ENCODE measurements at regions of chr9 and their contacts with region 1.

Region 1: GRCh38 chr9:101566904-101567724 is 27.7 kb downstream of the PPP3R2 start:
- DNase-seq: peak; percentile 80
- H3K4me3 Mint-ChIP-seq: no peak overlapping the region
- H3K27ac Mint-ChIP-seq: peak overlapping the region; percentile 59
- H3K4me1 Mint-ChIP-seq: peaks cover 53% of the 10 kb centered on the region
- H3K27me3 Mint-ChIP-seq: no peaks in the 10 kb centered on the region

Region 2: DNA sequence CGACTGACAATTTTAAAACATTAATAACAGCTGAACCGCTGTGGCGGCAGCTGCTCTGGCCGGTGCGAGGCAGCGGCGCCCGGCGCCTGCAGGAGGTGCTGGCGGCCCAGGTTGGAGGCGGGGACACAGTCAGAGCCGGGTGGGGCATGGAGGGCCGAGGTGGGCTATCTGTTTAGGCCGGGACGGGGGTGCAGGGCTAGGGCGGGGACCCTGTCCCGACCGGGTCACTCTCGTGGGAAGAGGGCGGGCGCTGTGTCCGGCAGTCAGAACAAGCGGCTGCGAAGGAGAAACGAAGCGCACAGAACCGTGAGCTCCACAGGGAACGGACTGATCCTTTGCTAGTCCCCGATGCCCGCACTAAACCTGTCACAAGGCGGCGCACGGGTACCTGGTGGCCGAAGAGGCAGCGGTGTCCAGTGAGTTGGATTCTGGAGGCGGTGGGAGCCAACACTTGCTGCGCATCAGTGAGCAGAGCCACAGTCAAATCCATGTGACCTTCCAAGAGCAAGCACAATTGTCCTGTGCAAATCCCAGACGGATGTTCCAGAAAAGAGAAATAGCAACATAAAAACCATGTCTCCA is 117.9 kb before region 1 on chr9:
- CTCF ChIA-PET with region 1: no interaction called
- intact Hi-C with region 1: loop called (anchors 1 kb)
- DNase-seq: peak; percentile 50
- H3K4me3 Mint-ChIP-seq: peak overlapping the region; percentile 53
- H3K27ac Mint-ChIP-seq: no peak overlapping the region
- H3K4me1 Mint-ChIP-seq: peaks cover 9% of the 10 kb centered on the region
- H3K27me3 Mint-ChIP-seq: peaks cover 52% of the 10 kb centered on the region

Region 3: GRCh38 chr9:101586651-101587050 is 19.5 kb after region 1 on chr9:
- CTCF ChIA-PET with region 1: no interaction called
- intact Hi-C with region 1: loop called (anchors 1 kb)
- DNase-seq: peak; percentile 32
- H3K4me3 Mint-ChIP-seq: no peak overlapping the region
- H3K27ac Mint-ChIP-seq: no peak overlapping the region
- H3K4me1 Mint-ChIP-seq: peaks cover 7% of the 10 kb centered on the region
- H3K27me3 Mint-ChIP-seq: no peaks in the 10 kb centered on the region

Region 4: DNA sequence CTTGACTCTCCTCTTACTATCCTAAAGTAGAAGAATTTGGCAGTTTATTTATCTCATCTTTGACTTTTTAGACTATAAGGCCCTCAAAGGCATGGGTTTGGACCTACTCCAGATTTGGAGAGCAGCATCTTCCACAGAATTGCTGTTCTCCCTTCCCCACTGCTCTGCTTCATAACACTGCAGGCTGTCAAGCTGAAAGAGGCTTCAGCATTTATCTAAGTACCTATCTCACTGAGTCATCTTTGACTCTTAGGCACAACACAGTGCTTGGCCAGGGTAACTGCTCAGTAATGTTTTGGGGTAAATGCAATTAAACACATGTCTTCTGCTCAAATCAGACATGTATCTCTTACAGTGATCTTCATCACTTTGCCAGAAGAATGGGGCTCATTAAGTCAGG is 110.7 kb after region 1 on chr9:
- CTCF ChIA-PET with region 1: no interaction called
- intact Hi-C with region 1: no loop called
- DNase-seq: no peak
- H3K4me3 Mint-ChIP-seq: no peak overlapping the region
- H3K27ac Mint-ChIP-seq: no peak overlapping the region
- H3K4me1 Mint-ChIP-seq: peaks cover 3% of the 10 kb centered on the region
- H3K27me3 Mint-ChIP-seq: no peaks in the 10 kb centered on the region

Measured in activated naive CD4-positive, alpha-beta T cell treated with anti-CD3 and anti-CD28 coated beads for 36 hours (primary cell).